GM13976 (cell line): ENCODE measurements at regions of chr17 and their contacts with region 1.

Region 1: GRCh38 chr17:1351971-1352370 is 48.1 kb downstream of the YWHAE start:
- DNase-seq: no peak
- CTCF ChIP-seq: no peak

Region 2: DNA sequence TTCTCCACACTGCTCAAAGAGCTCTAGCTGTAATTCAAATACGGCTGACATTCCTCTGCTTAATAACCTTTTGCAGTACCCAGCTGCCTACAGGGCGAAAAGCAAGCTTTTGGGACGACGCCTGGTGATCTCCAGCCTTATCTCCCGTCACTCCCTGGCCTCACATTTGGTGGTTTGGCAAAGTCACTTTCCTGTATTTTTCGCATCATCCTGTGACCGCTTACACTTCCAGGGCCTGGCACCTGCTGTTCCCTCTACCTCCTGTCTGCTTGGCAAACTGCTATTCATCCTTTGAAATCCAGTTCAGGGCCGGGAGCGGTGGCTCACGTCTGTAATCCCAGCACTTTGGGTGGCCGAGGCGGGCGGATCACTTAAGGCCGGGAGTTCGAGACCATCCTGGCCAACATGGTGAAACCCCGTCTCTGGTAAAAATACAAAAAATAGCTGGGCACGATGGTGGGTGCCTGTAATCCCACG is 84.5 kb before region 1 on chr17:
- in situ Hi-C with region 1: no loop called
- DNase-seq: no peak
- CTCF ChIP-seq: no peak

Region 3: GRCh38 chr17:1516388-1517161 is 164.6 kb after region 1 on chr17 and contains the start of gene INPP5K:
- in situ Hi-C with region 1: loop called (anchors 10 kb)
- DNase-seq: peak; percentile 100
- CTCF ChIP-seq: no peak